Naive thymus-derived CD4-positive, alpha-beta T cell (primary cell): ENCODE measurements at regions of chr6 and their contacts with region 1.

Region 1: GRCh38 chr6:26031595-26032339 is 55.5 kb upstream of the HFE start:
- DNase-seq: peak; percentile 56 to 94 (median 90)
- ATAC-seq: peak; percentile 79
- H3K4me3 ChIP-seq: peak overlapping the region; percentile 70
- H3K4me3 Mint-ChIP-seq: peak overlapping the region; percentile 89 to 98 (median 96)
- H3K27ac ChIP-seq: peak overlapping the region; percentile 69
- H3K27ac Mint-ChIP-seq: peak overlapping the region; percentile 93 to 98 (median 96)
- H3K4me1 ChIP-seq: peaks cover 23 to 31% of the 10 kb centered on the region in 2 donors
- H3K4me1 Mint-ChIP-seq: peaks cover 14 to 69% (median 43%) of the 10 kb centered on the region in 7 donors
- H3K27me3 ChIP-seq: no peaks in the 10 kb centered on the region
- H3K27me3 Mint-ChIP-seq: peaks cover 0 to 7% (median 0%) of the 10 kb centered on the region in 5 donors

Region 2: DNA sequence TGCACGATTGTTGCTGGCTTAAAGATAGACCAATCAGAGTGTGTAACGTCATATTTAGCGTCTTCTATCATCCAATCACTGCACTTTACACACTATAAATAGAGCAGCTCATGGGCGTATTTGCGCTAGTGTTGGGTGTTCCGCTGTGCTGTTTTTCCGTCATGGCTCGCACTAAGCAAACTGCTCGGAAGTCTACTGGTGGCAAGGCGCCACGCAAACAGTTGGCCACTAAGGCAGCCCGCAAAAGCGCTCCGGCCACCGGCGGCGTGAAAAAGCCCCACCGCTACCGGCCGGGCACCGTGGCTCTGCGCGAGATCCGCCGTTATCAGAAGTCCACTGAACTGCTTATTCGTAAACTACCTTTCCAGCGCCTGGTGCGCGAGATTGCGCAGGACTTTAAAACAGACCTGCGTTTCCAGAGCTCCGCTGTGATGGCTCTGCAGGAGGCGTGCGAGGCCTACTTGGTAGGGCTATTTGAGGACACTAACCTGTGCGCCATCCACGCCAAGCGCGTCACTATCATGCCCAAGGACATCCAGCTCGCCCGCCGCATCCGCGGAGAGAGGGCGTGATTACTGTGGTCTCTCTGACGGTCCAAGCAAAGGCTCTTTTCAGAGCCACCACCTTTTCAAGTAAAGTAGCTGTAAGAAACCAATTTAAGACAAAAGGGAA is 11.3 kb before region 1 on chr6:
- CTCF ChIA-PET with region 1: interaction called, 24 read pairs
- POLR2A ChIA-PET with region 1: interaction called, 2,497 read pairs
- intact Hi-C with region 1: loop called in 1 of 2 experiments (anchors 1 kb)
- DNase-seq: peak; percentile 68 to 94 (median 91)
- ATAC-seq: peak; percentile 66
- H3K4me3 ChIP-seq: peak overlapping the region; percentile 96
- H3K4me3 Mint-ChIP-seq: peak overlapping the region; percentile 82 to 100 (median 94)
- H3K27ac ChIP-seq: peak overlapping the region; percentile 97
- H3K27ac Mint-ChIP-seq: peak overlapping the region; percentile 95 to 100 (median 100)
- H3K4me1 ChIP-seq: peaks cover 0 to 10% of the 10 kb centered on the region in 2 donors
- H3K4me1 Mint-ChIP-seq: peaks cover 10 to 62% (median 45%) of the 10 kb centered on the region in 7 donors
- H3K27me3 ChIP-seq: no peaks in the 10 kb centered on the region
- H3K27me3 Mint-ChIP-seq: peaks cover 0 to 6% (median 0%) of the 10 kb centered on the region in 5 donors

Region 3: DNA sequence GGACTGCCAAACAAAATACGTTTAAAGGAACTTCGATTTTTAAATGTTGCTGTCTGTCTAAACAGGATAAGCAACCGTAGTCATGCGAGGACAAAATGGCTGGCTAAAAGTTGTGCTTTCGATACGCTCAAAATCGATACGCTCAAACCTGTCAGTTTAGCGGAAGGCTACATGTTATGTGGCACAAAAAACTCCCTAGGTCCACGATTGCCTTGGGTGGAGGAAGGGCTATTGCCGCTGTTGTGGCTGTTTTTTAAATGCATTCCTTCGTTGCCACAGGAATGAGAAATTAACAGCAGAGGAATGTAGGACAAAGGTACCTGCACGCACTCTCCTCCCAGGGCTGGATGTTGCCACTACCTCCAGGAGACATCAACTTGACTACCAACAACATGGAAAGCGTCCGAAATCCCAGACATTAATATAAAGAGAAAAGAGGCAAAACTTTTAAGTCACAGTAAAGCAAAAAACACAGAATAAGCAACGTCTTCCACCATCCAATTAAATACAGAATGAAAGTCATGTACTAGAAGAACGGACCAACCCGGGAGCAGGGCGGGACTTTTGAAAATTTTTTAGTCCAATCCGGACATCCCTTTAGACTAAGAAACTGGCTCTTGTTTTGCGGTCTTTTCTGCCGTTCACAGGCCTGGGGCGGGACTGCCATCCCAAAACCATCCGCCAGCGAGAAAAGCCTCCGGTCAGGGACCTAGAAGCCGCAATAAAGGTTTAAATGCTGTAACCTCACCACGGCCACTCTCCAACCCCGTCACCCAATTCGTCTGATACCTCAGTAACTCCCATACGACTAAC is 23.3 kb after region 1 on chr6:
- CTCF ChIA-PET with region 1: interaction called, 8 read pairs
- POLR2A ChIA-PET with region 1: interaction called, 2,497 read pairs
- intact Hi-C with region 1: loop called (anchors 1 kb)
- DNase-seq: peak; percentile 54 to 94 (median 90)
- ATAC-seq: peak; percentile 81
- H3K4me3 ChIP-seq: peak overlapping the region; percentile 93
- H3K4me3 Mint-ChIP-seq: peak overlapping the region; percentile 88 to 99 (median 95)
- H3K27ac ChIP-seq: peak overlapping the region; percentile 83
- H3K27ac Mint-ChIP-seq: peak overlapping the region; percentile 95 to 99 (median 98)
- H3K4me1 ChIP-seq: peaks cover 0 to 14% of the 10 kb centered on the region in 2 donors
- H3K4me1 Mint-ChIP-seq: peaks cover 9 to 52% (median 10%) of the 10 kb centered on the region in 7 donors
- H3K27me3 ChIP-seq: no peaks in the 10 kb centered on the region
- H3K27me3 Mint-ChIP-seq: peaks cover 0 to 10% (median 0%) of the 10 kb centered on the region in 5 donors

Region 4: GRCh38 chr6:26097268-26097875 is 65.6 kb after region 1 on chr6:
- CTCF ChIA-PET with region 1: interaction called, 22 read pairs
- POLR2A ChIA-PET with region 1: interaction called, 78 read pairs
- intact Hi-C with region 1: loop called in 1 of 2 experiments (anchors 1 kb)
- DNase-seq: peak; percentile 23 to 75 (median 61)
- ATAC-seq: peak; percentile 92
- H3K4me3 ChIP-seq: no peak overlapping the region
- H3K4me3 Mint-ChIP-seq: no peak overlapping the region
- H3K27ac ChIP-seq: no peak overlapping the region
- H3K27ac Mint-ChIP-seq: no peak overlapping the region
- H3K4me1 ChIP-seq: no peaks in the 10 kb centered on the region
- H3K4me1 Mint-ChIP-seq: peaks cover 4 to 13% (median 8%) of the 10 kb centered on the region in 7 donors
- H3K27me3 ChIP-seq: no peaks in the 10 kb centered on the region
- H3K27me3 Mint-ChIP-seq: peaks cover 0 to 9% (median 0%) of the 10 kb centered on the region in 5 donors

Region 5: DNA sequence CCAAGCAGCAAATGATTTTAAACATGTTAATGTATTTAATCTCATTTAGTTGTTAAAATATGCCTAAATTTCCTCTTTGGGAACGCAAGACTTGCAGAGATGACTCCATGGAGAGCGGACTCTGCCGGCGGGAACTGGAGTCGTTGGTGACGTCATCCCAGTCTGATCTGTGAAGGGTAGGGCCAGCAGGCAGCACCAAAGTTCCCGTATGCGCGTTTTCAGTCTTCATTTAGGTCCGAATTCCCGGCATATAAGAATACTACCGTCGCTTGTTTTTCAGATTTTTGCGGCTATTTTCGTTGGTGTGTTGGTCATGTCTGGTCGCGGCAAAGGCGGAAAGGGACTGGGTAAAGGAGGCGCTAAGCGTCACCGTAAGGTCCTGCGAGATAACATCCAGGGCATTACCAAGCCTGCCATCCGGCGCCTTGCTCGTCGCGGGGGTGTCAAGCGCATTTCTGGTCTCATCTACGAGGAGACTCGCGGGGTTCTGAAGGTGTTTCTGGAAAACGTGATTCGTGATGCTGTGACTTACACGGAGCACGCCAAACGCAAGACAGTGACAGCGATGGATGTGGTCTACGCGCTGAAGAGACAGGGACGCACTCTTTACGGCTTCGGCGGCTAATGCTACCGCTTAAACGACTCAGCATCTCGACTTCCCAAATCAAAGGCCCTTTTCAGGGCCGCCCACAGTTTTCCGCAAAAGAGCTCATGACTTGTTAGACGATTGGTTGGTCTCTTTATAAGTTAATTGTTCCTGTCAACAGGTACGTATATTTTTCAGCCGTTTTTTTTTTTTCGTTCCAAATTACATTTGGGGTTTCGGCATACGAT is 172.8 kb after region 1 on chr6:
- CTCF ChIA-PET with region 1: no interaction called
- POLR2A ChIA-PET with region 1: interaction called, 292 read pairs
- intact Hi-C with region 1: loop called (anchors 1 to 2 kb)
- DNase-seq: peak; percentile 67 to 95 (median 89)
- ATAC-seq: peak; percentile 72
- H3K4me3 ChIP-seq: peak overlapping the region; percentile 77
- H3K4me3 Mint-ChIP-seq: no peak overlapping the region
- H3K27ac ChIP-seq: peak overlapping the region; percentile 90
- H3K27ac Mint-ChIP-seq: no peak overlapping the region
- H3K4me1 ChIP-seq: peaks cover 20 to 23% of the 10 kb centered on the region in 2 donors
- H3K4me1 Mint-ChIP-seq: peaks cover 9 to 36% (median 26%) of the 10 kb centered on the region in 7 donors
- H3K27me3 ChIP-seq: no peaks in the 10 kb centered on the region
- H3K27me3 Mint-ChIP-seq: peaks cover 0 to 5% (median 0%) of the 10 kb centered on the region in 5 donors

Region 6: GRCh38 chr6:26249957-26250697 is 218.4 kb after region 1 on chr6:
- CTCF ChIA-PET with region 1: no interaction called
- POLR2A ChIA-PET with region 1: interaction called, 23 read pairs
- intact Hi-C with region 1: no loop called
- DNase-seq: peak; percentile 53 to 85 (median 80)
- ATAC-seq: peak; percentile 85
- H3K4me3 ChIP-seq: peak overlapping the region; percentile 84
- H3K4me3 Mint-ChIP-seq: peak overlapping the region; percentile 88 to 100 (median 96)
- H3K27ac ChIP-seq: peak overlapping the region; percentile 71
- H3K27ac Mint-ChIP-seq: peak overlapping the region; percentile 85 to 97 (median 94)
- H3K4me1 ChIP-seq: peaks cover 4 to 19% of the 10 kb centered on the region in 2 donors
- H3K4me1 Mint-ChIP-seq: peaks cover 20 to 48% (median 39%) of the 10 kb centered on the region in 7 donors
- H3K27me3 ChIP-seq: no peaks in the 10 kb centered on the region
- H3K27me3 Mint-ChIP-seq: no peaks in the 10 kb centered on the region

Region 7: DNA sequence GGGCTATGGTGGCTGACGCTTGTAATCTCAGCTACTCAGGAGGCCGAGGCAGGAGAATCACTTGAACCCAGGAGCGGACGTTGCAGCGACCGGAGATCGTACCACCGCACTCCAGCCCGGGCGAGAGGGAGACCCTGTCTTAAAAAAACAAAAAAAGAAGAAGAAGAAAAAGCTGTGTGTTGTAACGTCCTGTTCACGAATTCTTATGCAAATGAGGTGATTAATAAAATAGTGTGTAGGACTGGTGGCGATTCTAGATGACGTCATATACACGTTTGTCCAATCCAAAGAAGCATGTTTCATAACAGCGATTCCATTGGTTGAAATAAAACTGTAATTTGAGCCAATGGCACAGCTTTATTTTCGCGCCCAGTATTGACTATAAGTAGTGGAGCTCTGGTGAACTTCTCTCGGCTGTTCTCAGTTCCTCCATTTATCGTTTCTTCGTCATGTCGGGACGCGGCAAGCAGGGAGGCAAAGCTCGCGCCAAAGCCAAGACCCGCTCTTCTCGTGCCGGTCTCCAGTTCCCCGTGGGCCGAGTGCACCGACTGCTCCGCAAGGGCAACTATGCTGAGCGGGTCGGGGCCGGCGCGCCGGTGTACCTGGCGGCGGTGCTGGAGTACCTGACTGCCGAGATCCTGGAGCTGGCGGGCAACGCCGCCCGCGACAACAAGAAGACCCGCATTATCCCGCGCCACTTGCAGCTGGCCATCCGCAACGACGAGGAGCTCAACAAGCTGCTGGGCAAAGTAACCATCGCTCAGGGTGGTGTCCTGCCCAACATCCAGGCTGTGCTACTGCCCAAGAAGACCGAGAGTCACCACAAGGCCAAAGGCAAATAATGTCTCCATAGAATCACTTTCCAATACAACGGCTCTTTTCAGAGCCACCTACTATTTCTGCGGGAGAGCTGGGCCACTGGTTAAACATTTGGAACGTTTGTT is 1833.4 kb after region 1 on chr6:
- CTCF ChIA-PET with region 1: no interaction called
- POLR2A ChIA-PET with region 1: interaction called, 34 read pairs
- intact Hi-C with region 1: no loop called
- DNase-seq: peak; percentile 56 to 93 (median 89)
- ATAC-seq: peak; percentile 85
- H3K4me3 ChIP-seq: peak overlapping the region; percentile 74
- H3K4me3 Mint-ChIP-seq: peak overlapping the region; percentile 85 to 99 (median 97)
- H3K27ac ChIP-seq: peak overlapping the region; percentile 71
- H3K27ac Mint-ChIP-seq: peak overlapping the region; percentile 88 to 98 (median 95)
- H3K4me1 ChIP-seq: peaks cover 8 to 25% of the 10 kb centered on the region in 2 donors
- H3K4me1 Mint-ChIP-seq: peaks cover 22 to 64% (median 46%) of the 10 kb centered on the region in 7 donors
- H3K27me3 ChIP-seq: no peaks in the 10 kb centered on the region
- H3K27me3 Mint-ChIP-seq: peaks cover 0 to 16% (median 0%) of the 10 kb centered on the region in 5 donors